Esophagus muscularis mucosa (tissue), 4 donors: ENCODE measurements at regions of chr12 and their contacts with region 1.

Region 1: GRCh38 chr12:98593351-98594049 is at the start of gene SLC25A3:
- DNase-seq: peak; percentile 99
- H3K4me3 ChIP-seq: peak within 1 kb of the TSS; percentile 71 to 92 (median 84)
- H3K27ac ChIP-seq: peak within 1 kb of the TSS; percentile 94 to 99 (median 96)
- H3K4me1 ChIP-seq: peaks cover 28 to 39% (median 37%) of the 10 kb centered on the region in 4 donors
- H3K27me3 ChIP-seq: no peaks in the 10 kb centered on the region
- CTCF ChIP-seq: no peak
- EP300 ChIP-seq: no peak
- POLR2A ChIP-seq: peak; percentile 90
- total RNA-seq, gene SLC25A3: 505 to 652 (median 520) TPM

Region 2: DNA sequence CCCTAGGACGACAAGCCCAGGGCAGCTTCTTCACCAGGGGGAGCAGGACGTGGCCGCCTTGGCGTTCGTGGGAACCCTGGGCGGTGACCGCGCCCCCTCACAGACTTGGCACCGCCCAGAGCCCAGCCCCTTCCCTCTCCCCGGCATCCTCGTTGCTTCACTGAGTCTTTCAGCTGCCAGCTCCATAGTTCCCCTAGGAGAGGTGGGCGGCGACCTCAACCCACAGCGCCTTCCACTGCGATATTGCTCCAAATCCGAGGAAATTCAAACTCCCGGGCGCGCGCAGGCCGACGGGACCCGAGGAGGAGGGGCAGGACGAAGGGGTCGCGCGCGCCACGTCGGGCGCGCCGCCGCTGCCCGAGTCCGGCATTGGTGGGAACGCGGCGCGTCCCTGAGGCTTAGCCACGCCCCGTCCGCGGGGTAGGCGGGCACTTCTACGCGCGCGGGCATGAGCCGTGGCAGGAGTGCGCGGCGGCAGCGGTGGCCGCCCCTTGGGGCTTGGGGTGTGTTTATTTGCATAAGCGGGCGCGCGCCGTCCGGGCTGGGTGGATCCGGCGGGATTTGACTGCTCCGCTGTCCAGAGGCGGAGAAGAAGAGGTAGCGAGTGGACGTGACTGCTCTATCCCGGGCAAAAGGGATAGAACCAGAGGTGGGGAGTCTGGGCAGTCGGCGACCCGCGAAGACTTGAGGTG is 51.4 kb after region 1 on chr12 and contains the starts of genes APAF1 and IKBIP:
- intact Hi-C with region 1: loop called (anchors 2 kb)
- DNase-seq: peak; percentile 98
- H3K4me3 ChIP-seq: peak within 1 kb of the TSS; percentile 73 to 97 (median 92)
- H3K27ac ChIP-seq: peak within 1 kb of the TSS; percentile 83 to 89 (median 86)
- H3K4me1 ChIP-seq: peaks cover 8 to 33% (median 31%) of the 10 kb centered on the region in 4 donors
- H3K27me3 ChIP-seq: no peaks in the 10 kb centered on the region
- CTCF ChIP-seq: peak in 1 of 3 experiments; percentile 6
- EP300 ChIP-seq: no peak
- POLR2A ChIP-seq: peak; percentile 22
- total RNA-seq, gene APAF1: 9.1 to 10.9 (median 10.0) TPM
- total RNA-seq, gene IKBIP: 4.2 to 14.0 (median 10.2) TPM